Heart left ventricle (tissue), 16 donors: ENCODE measurements at regions of chr1 and their contacts with region 1.

Region 1: GRCh38 chr1:232630047-232630893 is at the start of gene SIPA1L2:
- DNase-seq: peak; percentile 96 to 98 (median 96)
- ATAC-seq: peak; percentile 92 to 98 (median 96)
- H3K4me3 ChIP-seq: peak within 1 kb of the TSS; percentile 68 to 96 (median 90)
- H3K27ac ChIP-seq: peak within 1 kb of the TSS; percentile 78 to 98 (median 94)
- H3K4me1 ChIP-seq: peaks cover 0 to 50% (median 25%) of the 10 kb centered on the region in 12 donors
- H3K27me3 ChIP-seq: no peaks in the 10 kb centered on the region
- CTCF ChIP-seq: peak in 10 of 12 donors; percentile 30 to 65 (median 52)
- POLR2A ChIP-seq: peak in 1 of 2 donors; percentile 94
- total RNA-seq, gene SIPA1L2: 70.8 to 148 (median 102) TPM

Region 2: GRCh38 chr1:231866392-231867331 is 763.6 kb before region 1 on chr1:
- intact Hi-C with region 1: loop called (anchors 1 to 10 kb)
- DNase-seq: peak; percentile 49 to 70 (median 59)
- ATAC-seq: peak in 3 of 4 donors; percentile 35 to 45 (median 41)
- H3K4me3 ChIP-seq: no peak overlapping the region
- H3K27ac ChIP-seq: no peak overlapping the region
- H3K4me1 ChIP-seq: peaks cover 12 to 49% (median 36%) of the 10 kb centered on the region in 12 donors
- H3K27me3 ChIP-seq: no peaks in the 10 kb centered on the region
- CTCF ChIP-seq: peak; percentile 81 to 96 (median 90)
- POLR2A ChIP-seq: no peak

Region 3: DNA sequence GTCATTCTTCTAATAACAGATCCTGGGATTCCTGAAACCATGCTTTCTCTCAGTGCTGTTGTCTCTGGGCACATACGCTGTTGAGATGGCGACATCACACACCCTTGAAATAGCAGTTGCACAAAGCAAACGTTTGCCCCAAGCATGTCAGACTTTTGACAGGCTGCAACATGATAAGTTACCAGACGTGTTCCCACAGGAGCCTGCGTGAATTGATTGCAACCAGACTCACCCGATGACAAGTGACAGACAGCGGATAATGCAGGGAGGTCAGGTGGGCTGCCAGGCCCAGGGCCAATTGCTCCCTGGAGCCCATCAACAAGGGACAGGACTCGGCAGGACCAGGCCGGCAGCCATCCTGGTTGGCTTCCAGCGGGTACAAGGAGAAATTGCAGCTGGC is 311.2 kb before region 1 on chr1:
- intact Hi-C with region 1: loop called in 5 of 10 experiments (anchors 5 to 10 kb)
- DNase-seq: peak; percentile 87 to 95 (median 89)
- ATAC-seq: peak; percentile 95 to 96 (median 96)
- H3K4me3 ChIP-seq: no peak overlapping the region
- H3K27ac ChIP-seq: peak overlapping the region in 11 of 12 donors; percentile 5 to 95 (median 79)
- H3K4me1 ChIP-seq: peaks cover 0 to 17% (median 11%) of the 10 kb centered on the region in 12 donors
- H3K27me3 ChIP-seq: no peaks in the 10 kb centered on the region
- CTCF ChIP-seq: no peak
- POLR2A ChIP-seq: no peak

Region 4: GRCh38 chr1:232477728-232478127 is 152.5 kb before region 1 on chr1:
- intact Hi-C with region 1: loop called in 5 of 10 experiments (anchors 10 kb)
- DNase-seq: peak in 1 of 5 donors; percentile 31
- ATAC-seq: peak in 3 of 4 donors; percentile 43 to 70 (median 64)
- H3K4me3 ChIP-seq: no peak overlapping the region
- H3K27ac ChIP-seq: peak overlapping the region in 3 of 12 donors; percentile 6 to 48 (median 16)
- H3K4me1 ChIP-seq: peaks cover 0 to 43% (median 24%) of the 10 kb centered on the region in 12 donors
- H3K27me3 ChIP-seq: no peaks in the 10 kb centered on the region
- CTCF ChIP-seq: no peak
- POLR2A ChIP-seq: no peak

Region 5: DNA sequence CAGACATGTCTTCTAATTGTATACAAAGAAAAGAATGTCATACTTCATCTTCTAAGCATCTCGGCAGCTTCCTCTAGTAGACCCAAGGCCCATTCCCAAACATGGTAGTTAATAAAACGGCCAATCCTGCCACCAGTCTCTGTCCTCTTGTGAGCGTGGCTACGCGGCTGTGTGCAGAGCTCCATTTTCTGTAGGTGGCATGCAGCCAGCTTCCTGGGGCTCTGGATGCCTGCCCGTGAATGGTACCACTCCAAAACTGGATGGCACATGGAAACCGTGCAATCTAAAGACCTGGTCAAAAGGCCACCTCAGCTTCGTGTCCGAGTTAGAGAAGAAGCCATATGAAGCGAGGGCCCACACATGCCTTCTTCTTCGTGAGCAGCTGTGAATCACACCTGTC is 111.1 kb before region 1 on chr1:
- intact Hi-C with region 1: loop called in 4 of 10 experiments (anchors 10 kb)
- DNase-seq: peak; percentile 48 to 66 (median 64)
- ATAC-seq: peak; percentile 82 to 88 (median 84)
- H3K4me3 ChIP-seq: no peak overlapping the region
- H3K27ac ChIP-seq: no peak overlapping the region
- H3K4me1 ChIP-seq: peaks cover 0 to 40% (median 12%) of the 10 kb centered on the region in 12 donors
- H3K27me3 ChIP-seq: no peaks in the 10 kb centered on the region
- CTCF ChIP-seq: no peak
- POLR2A ChIP-seq: no peak

Region 6: DNA sequence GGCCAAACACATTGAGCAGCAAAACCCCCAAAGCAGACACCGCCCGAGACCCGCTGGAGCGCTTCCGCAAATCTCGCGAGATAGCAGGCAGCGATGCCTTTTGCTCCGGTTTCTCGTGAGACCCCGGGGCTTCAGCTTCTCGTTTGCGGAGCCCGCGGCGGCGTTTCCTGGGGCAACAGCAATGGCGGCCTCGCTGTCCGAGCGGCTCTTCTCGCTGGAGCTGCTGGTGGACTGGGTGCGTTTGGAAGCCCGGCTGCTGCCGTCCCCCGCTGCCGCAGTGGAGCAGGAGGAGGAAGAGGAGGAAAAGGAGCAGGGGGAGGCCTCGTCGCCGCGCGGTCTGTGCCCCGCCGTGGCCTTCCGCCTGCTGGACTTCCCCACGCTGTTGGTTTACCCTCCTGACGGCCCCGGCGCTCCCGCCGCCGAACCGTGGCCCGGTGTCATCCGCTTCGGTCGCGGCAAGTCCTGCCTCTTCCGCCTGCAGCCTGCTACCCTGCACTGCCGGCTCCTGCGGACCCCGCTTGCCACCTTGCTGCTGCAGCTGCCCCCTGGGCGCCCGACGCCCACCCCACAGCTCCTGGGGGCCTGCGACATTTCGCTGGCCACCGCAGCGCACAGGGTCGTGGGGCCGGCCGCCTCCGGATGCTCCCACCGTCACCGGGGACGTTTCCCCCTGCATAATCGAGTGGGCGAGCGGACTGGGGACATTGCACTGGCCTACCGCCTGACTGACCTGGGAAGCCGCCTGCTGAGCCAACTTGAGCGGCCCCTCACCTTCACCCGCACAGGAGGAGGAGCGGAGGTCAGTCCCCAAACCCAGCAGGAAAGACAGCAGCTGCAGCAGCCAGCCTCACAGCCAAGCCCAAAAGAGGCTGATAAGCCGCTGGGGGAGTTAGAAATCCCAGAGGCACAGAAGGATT is 175.3 kb after region 1 on chr1 and contains the start of gene MAP10:
- intact Hi-C with region 1: loop called in 6 of 10 experiments (anchors 5 to 10 kb)
- DNase-seq: peak; percentile 78 to 90 (median 88)
- ATAC-seq: peak; percentile 85 to 92 (median 86)
- H3K4me3 ChIP-seq: peak within 1 kb of the TSS; percentile 50 to 93 (median 74)
- H3K27ac ChIP-seq: peak within 1 kb of the TSS; percentile 86 to 96 (median 92)
- H3K4me1 ChIP-seq: peaks cover 2 to 62% (median 25%) of the 10 kb centered on the region in 12 donors
- H3K27me3 ChIP-seq: no peaks in the 10 kb centered on the region
- CTCF ChIP-seq: no peak
- POLR2A ChIP-seq: peak in 1 of 2 donors; percentile 44
- total RNA-seq, gene MAP10: 2.4 to 4.9 (median 3.6) TPM

Region 7: DNA sequence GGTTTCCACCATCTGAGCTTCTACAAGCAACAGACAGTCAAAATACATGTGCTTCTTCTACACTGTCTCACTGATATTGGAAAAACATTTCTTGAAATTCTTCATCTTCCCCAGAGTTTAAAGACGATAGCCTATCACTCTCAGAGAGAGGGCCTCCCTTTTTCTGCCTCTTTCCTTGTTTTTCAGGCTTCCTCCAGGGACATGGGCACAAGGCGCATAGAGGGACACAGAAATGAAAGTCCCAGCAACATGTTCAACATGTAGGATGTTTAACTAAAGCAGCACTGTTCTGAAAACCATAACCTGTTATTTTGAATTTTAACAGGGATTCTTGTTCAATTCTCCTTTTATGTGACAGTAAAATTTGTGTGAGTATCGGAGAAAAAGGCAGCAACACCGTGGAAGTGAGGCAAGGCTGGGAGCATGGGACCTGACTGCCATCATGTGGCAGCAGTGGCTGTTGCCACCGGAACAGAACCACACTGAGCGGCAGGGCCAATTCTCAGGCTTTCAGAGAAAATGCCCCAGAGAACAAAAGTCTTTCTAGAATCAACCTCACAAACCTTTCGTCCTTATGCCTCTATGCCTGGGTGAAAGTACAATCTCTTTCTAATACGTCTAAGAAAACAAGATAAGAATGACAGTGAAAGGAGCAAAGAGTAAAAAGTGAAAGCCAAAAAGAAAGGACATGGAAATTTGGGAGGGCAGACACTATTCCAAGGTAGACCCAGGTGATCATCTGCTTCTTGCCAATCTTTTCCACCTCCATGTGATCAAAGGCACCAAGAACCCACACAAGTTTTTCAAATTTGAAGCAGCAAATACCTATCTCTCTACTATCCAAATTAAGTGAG is 610.8 kb after region 1 on chr1:
- intact Hi-C with region 1: loop called in 8 of 10 experiments (anchors 1 to 5 kb)
- DNase-seq: peak; percentile 56 to 72 (median 62)
- ATAC-seq: peak; percentile 83 to 94 (median 92)
- H3K4me3 ChIP-seq: peak overlapping the region in 7 of 12 donors; percentile 8 to 17 (median 11)
- H3K27ac ChIP-seq: no peak overlapping the region
- H3K4me1 ChIP-seq: peaks cover 0 to 25% (median 6%) of the 10 kb centered on the region in 12 donors
- H3K27me3 ChIP-seq: no peaks in the 10 kb centered on the region
- CTCF ChIP-seq: peak; percentile 67 to 91 (median 82)
- POLR2A ChIP-seq: no peak